Dorsolateral prefrontal cortex (tissue), 120 donors: ENCODE measurements at regions of chr10 and their contacts with region 1.

Region 1: GRCh38 chr10:104121520-104122224 is at the start of gene SFR1:
- DNase-seq: peak; percentile 96 to 99 (median 98)
- H3K4me3 ChIP-seq: peak within 1 kb of the TSS; percentile 64 to 95 (median 80)
- H3K27ac ChIP-seq: peak within 1 kb of the TSS; percentile 87 to 99 (median 98)
- H3K27me3 ChIP-seq: no peaks in the 10 kb centered on the region
- CTCF ChIP-seq: peak; percentile 52 to 86 (median 74)
- total RNA-seq, gene SFR1: 3.1 to 19.2 (median 7.6) TPM

Region 2: GRCh38 chr10:103888113-103888841 is 233.4 kb before region 1 on chr10:
- intact Hi-C with region 1: loop called (anchors 1 to 5 kb)
- DNase-seq: peak in 1 of 10 donors; percentile 16
- H3K4me3 ChIP-seq: no peak overlapping the region
- H3K27ac ChIP-seq: peak overlapping the region in 44 of 59 donors; percentile 8 to 81 (median 58)
- H3K27me3 ChIP-seq: no peaks in the 10 kb centered on the region
- CTCF ChIP-seq: peak; percentile 61 to 95 (median 86)

Region 3: GRCh38 chr10:103966671-103967447 is 154.8 kb before region 1 on chr10 and contains the start of gene SLK:
- intact Hi-C with region 1: loop called (anchors 1 to 2 kb)
- DNase-seq: peak; percentile 60 to 91 (median 74)
- H3K4me3 ChIP-seq: peak within 1 kb of the TSS; percentile 59 to 96 (median 85)
- H3K27ac ChIP-seq: peak within 1 kb of the TSS; percentile 68 to 99 (median 93)
- H3K27me3 ChIP-seq: no peaks in the 10 kb centered on the region
- CTCF ChIP-seq: peak in 20 of 56 donors; percentile 4 to 53 (median 22)
- total RNA-seq, gene SLK: 27.0 to 53.9 (median 38.6) TPM

Region 4: GRCh38 chr10:104045151-104046089 is 76.3 kb before region 1 on chr10:
- intact Hi-C with region 1: loop called (anchors 1 kb)
- DNase-seq: peak in 8 of 10 donors; percentile 25 to 74 (median 65)
- H3K4me3 ChIP-seq: no peak overlapping the region
- H3K27ac ChIP-seq: peak overlapping the region in 27 of 59 donors; percentile 3 to 76 (median 42)
- H3K27me3 ChIP-seq: no peaks in the 10 kb centered on the region
- CTCF ChIP-seq: peak in 55 of 56 donors; percentile 38 to 88 (median 71)

Region 5: GRCh38 chr10:104563548-104563947 is 441.9 kb after region 1 on chr10:
- intact Hi-C with region 1: no loop called
- DNase-seq: no peak
- H3K4me3 ChIP-seq: no peak overlapping the region
- H3K27ac ChIP-seq: no peak overlapping the region
- H3K27me3 ChIP-seq: peaks cover 0 to 4% (median 0%) of the 10 kb centered on the region in 45 donors
- CTCF ChIP-seq: no peak